ENCODE measurements at regions of chr2 and their contacts with region 1.

Region 1: DNA sequence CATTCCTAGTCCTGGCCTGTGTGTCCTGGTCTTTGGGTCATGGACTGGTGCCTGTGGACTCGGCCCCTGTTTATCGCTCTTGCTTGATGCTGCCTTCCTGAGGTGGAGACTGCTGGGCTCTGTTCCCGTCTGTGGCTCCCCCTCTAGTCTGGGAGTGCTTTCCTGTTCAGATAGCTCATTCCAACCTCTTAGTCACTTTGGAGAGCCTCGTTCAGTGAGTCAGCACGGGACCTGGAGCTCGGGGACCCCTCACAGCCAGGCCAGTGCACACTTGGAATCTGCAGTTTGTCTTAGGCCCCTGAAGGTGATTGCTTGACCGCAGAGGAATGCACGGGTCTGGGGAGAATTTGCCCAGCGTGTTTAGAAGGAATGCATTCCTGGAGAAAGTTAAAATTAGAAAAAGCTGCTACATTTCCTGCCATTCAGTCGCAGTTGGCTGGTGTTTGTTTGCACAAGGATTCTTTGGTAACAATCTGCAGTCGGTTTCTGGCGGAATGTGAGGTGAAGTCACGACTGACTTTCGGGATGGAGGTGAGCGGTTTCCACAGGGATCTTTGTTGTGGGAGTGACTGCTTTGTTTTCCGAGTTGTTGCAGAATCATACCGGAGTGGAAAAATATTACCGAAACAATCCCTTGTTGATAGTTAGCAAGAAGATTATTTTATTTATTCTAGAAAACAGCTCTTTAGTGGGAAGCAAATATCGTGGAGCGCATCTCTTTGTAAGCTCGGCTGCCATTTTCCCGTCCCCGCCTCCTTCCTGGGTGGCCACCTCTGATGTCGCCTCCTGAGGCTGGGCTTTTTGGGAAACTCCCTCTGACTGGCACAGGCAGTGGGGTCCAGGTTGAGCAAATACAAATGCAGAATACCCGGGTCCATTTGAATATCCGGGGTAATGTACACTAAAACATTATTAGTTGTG is 29.6 kb downstream of the SH3BP4 start:
- DNase-seq: peak; percentile 98 to 100
- H3K4me3 ChIP-seq: peak overlapping the region; percentile 52
- H3K27ac ChIP-seq: peak overlapping the region; percentile 96
- H3K4me1 ChIP-seq: peaks cover 78% of the 10 kb centered on the region
- H3K27me3 ChIP-seq: no peaks in the 10 kb centered on the region
- CTCF ChIP-seq: no peak

Region 2: GRCh38 chr2:233700028-233700635 is 1281.3 kb before region 1 on chr2:
- CTCF ChIA-PET with region 1: no interaction called
- POLR2A ChIA-PET with region 1: no interaction called
- intact Hi-C with region 1: loop called (anchors 10 kb)
- DNase-seq: peak; percentile 67 to 98
- H3K4me3 ChIP-seq: peak overlapping the region; percentile 69; the same call in 1 of the 2 replicates
- H3K27ac ChIP-seq: peak overlapping the region; percentile 97
- H3K4me1 ChIP-seq: peaks cover 92% of the 10 kb centered on the region
- H3K27me3 ChIP-seq: no peaks in the 10 kb centered on the region
- CTCF ChIP-seq: no peak

Region 3: DNA sequence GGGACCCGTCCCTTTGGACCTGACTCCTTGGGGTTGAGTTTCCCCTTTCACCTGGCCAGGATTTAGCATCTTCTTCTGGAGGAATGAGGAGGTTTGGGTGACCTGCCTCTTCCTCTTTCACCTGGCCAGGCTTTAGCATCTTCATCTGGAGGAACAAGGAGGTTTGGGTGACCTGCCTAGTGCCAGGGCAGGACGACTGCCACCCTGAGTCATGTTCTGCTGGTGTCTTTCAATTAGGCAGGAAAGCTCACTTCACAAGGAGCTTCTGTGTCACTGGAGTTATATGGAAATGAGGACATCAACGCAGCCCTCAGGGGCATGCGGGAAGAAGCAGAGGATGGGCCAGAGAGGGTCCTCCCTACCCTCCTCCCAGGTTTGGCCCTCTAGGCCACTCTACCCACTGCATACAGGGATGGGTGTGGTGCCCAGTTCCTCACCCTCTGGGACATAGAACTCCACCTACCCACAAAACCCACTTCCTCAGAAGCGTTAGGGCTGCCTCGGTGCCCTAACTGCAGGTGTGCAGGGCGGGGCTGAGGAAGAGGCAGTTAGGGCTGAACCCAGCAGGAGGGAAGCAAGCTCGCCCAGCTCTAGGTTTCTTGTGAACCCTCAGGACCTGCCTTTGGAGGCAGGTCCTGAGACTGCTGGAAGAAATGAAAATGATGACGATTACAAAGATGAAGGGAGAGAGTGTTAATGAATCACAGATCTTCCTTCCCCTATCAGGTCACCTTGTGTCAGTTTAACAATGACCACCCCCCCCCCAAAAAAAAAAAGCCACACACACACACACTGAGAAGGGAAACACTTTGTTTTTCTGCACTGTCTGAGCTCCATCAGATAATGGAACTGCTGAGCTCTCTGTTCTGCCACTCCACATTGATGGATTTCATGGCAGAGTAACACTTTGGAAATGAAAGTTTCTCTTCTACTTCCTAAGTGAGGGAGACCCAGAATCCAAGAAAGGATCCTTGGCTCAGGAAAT is 555.5 kb before region 1 on chr2:
- CTCF ChIA-PET with region 1: no interaction called
- POLR2A ChIA-PET with region 1: no interaction called
- intact Hi-C with region 1: loop called (anchors 5 kb)
- DNase-seq: peak; percentile 83 to 85
- H3K4me3 ChIP-seq: no peak overlapping the region
- H3K27ac ChIP-seq: peak overlapping the region; percentile 44
- H3K4me1 ChIP-seq: peaks cover 68% of the 10 kb centered on the region
- H3K27me3 ChIP-seq: no peaks in the 10 kb centered on the region
- CTCF ChIP-seq: no peak

Region 4: DNA sequence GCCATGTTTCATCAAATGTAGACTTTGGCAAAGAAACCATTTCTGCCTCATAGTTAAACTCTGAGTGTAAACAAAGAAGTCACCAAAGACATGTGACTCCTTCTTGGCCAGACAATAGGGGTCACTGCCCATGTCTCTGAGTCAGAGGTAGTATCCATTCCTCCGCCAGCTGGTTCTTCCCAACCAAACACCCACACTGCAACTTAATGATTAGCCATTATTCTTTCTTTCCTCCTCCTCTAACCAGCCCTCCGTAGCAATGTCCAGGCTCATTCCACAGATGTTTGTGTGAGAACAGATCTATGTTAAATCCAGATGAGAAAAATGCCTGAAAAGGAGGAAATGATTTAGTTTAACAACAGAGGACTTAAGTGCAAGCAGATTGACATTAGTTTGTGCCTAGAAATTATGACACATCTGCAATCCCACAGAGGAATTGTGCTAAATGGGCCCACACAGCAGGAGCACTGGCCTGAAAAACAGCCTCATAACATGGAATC is 157.5 kb before region 1 on chr2:
- CTCF ChIA-PET with region 1: no interaction called
- POLR2A ChIA-PET with region 1: interaction called, 5 read pairs
- intact Hi-C with region 1: loop called (anchors 2 kb)
- DNase-seq: peak; percentile 77 to 92
- H3K4me3 ChIP-seq: no peak overlapping the region
- H3K27ac ChIP-seq: peak overlapping the region; percentile 46; the same call in 1 of the 2 replicates
- H3K4me1 ChIP-seq: peaks cover 54% of the 10 kb centered on the region
- H3K27me3 ChIP-seq: no peaks in the 10 kb centered on the region
- CTCF ChIP-seq: no peak

Region 5: DNA sequence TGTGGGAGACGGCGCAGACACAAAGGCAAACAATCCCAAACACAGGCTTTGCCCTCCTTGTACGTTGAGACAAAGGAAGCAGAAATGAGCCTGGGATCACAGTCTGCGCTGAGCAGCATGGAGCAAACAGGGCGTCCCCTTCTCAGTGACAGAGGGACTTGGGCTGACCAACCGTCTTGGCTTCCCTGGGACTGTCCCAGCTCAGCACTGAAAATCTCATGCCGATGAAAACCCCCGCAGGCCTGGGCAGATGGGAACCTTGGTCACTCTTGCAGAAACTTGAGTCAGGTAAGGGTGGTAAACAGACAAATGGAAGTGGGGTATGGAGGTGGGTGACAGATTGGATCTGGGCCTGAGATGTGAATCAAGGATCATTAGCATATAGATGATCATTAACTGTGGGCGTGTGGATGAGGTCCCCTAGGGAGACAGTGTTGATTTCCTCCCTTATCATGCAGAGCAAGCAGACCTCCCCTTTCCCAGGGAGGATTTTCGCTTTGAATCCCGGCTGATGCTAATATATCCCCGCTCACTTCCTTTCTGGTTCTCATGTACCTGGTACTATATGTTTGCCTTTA is 48.8 kb before region 1 on chr2:
- CTCF ChIA-PET with region 1: no interaction called
- POLR2A ChIA-PET with region 1: no interaction called
- intact Hi-C with region 1: no loop called
- DNase-seq: no peak
- H3K4me3 ChIP-seq: no peak overlapping the region
- H3K27ac ChIP-seq: no peak overlapping the region
- H3K4me1 ChIP-seq: no peaks in the 10 kb centered on the region
- H3K27me3 ChIP-seq: no peaks in the 10 kb centered on the region
- CTCF ChIP-seq: no peak

Region 6: DNA sequence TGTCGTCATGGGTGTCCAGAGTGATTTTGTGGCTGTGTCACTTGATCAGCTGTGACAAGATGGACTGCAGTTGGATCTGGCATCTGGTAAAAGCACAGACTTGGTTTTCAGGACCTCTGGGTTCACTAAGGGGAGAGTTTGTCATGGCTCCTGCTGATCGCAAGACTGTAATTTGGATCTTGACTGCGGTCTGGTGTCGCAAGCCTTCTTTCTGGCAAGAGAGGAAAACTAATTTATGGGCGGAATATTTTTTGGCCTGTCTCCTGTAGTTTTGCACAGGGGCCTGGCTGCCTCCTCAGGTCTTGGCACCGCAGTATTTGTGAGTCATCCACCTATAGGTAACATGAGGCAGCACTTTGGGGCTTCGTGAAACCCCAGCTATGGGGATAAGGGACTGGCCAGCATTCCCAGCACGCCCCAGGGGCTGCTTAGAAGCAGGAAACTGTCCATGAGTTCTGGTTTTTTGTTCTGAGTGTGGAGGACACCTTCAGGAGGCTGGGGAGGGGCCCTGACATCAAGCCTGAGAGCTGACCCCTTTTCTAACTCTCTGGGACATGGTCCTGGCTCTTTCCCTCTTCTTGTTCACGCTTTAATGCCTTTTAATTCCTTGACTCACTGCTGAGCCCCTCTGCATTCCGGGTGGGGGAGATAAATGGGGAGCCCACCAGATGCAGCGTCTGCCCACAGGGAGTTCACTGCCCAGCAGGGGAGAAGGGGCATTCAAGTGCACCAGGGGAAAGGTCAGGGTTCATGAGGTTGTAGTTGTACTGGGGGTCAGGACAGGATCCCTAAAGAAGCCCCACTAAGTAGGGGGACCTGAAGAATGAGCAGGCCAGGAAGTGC is 17.5 kb before region 1 on chr2:
- CTCF ChIA-PET with region 1: interaction called, 8 read pairs
- POLR2A ChIA-PET with region 1: interaction called, 10 read pairs
- intact Hi-C with region 1: loop called (anchors 1 kb)
- DNase-seq: peak; percentile 90 to 98
- H3K4me3 ChIP-seq: peak overlapping the region; percentile 5; the same call in 1 of the 2 replicates
- H3K27ac ChIP-seq: peak overlapping the region; percentile 90
- H3K4me1 ChIP-seq: peaks cover 92% of the 10 kb centered on the region
- H3K27me3 ChIP-seq: no peaks in the 10 kb centered on the region
- CTCF ChIP-seq: 0 out of 2 replicates have a peak, but pooled peaks have one; percentile 14

Region 7: GRCh38 chr2:235045336-235045972 is 64.0 kb after region 1 on chr2:
- CTCF ChIA-PET with region 1: no interaction called
- POLR2A ChIA-PET with region 1: no interaction called
- intact Hi-C with region 1: loop called (anchors 1 kb)
- DNase-seq: peak; percentile 75 to 94
- H3K4me3 ChIP-seq: peak overlapping the region; percentile 10; the same call in 1 of the 2 replicates
- H3K27ac ChIP-seq: peak overlapping the region; percentile 80
- H3K4me1 ChIP-seq: peaks cover 73% of the 10 kb centered on the region
- H3K27me3 ChIP-seq: no peaks in the 10 kb centered on the region
- CTCF ChIP-seq: no peak

Region 8: DNA sequence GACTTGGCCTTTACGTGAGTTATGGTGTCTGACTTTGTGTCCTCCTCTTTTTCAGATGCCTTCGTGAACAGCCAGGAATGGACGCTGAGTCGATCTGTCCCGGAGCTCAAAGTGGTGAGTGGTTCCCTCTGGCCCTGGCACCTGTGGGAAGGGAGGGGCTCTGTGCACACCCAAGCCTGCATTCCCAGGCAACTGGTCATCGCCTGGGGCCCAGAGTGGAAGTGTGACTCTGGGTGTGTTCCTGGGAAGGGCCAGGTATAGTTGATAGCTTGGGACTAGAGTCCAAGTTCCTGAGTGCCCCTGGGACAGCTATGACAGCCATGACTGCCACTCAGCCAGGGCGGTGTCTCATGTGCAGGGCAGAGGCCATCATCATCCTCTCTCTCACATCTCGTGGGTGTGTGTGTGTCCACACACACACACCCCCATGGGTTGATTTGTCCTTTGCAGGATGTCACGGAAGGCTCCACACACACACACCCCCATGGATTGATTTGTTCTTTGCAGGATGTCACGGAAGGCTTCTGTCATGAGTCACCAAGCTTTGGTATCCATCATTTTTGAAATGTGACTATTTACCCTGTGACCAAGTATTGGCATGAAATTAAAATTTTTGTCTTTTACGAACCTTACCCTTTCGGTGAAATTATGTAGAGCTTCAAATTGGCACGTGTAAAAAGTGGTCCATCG is 727.8 kb after region 1 on chr2:
- CTCF ChIA-PET with region 1: no interaction called
- POLR2A ChIA-PET with region 1: no interaction called
- intact Hi-C with region 1: loop called (anchors 5 kb)
- DNase-seq: peak; percentile 99 to 100
- H3K4me3 ChIP-seq: peak overlapping the region; percentile 9; the same call in 1 of the 2 replicates
- H3K27ac ChIP-seq: peak overlapping the region; percentile 96
- H3K4me1 ChIP-seq: peaks cover 57% of the 10 kb centered on the region
- H3K27me3 ChIP-seq: no peaks in the 10 kb centered on the region
- CTCF ChIP-seq: no peak